Posterior cingulate gyrus (tissue), 11 donors: ENCODE measurements at regions of chr17 and their contacts with region 1.

Region 1: DNA sequence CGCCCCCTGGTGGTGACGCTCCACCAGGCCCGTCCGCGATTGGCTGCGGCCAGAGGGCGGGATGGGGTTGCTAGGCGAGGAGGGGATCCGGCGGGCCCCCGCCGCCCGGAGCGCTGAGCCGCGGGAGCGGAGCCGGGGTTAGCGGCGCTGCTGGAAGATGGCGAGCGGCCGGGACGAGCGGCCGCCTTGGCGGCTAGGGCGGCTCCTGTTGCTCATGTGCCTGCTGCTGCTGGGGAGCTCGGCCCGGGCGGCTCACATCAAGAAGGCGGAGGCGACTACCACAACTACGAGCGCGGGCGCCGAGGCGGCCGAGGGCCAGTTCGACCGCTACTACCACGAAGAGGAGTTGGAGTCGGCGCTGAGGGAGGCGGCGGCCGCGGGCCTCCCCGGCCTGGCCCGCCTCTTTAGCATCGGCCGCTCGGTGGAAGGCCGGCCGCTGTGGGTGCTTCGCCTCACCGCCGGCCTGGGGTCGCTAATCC is at the start of gene CPD:
- DNase-seq: peak; percentile 96 to 100 (median 99)

Region 2: GRCh38 chr17:30291543-30292285 is 87.1 kb before region 1 on chr17 and contains the start of gene BLMH:
- intact Hi-C with region 1: loop called (anchors 5 kb)
- DNase-seq: peak; percentile 69 to 96 (median 76)

Region 3: GRCh38 chr17:30824356-30825145 is 445.7 kb after region 1 on chr17 and contains the start of gene CRLF3:
- intact Hi-C with region 1: loop called (anchors 5 kb)
- DNase-seq: peak; percentile 78 to 99 (median 88)